A549 (cell line): ENCODE measurements at regions of chr1 and their contacts with region 1.

Region 1: GRCh38 chr1:155323798-155324610 is 3.3 kb downstream of the RUSC1 start:
- DNase-seq: peak; percentile 97 to 98
- ATAC-seq: peak; percentile 77 to 85
- H3K4me3 ChIP-seq: peak overlapping the region; percentile 71
- H3K27ac ChIP-seq: peak overlapping the region; percentile 94 to 98
- H3K4me1 ChIP-seq: peaks cover 20% of the 10 kb centered on the region
- CTCF ChIP-seq: no peak
- EP300 ChIP-seq: no peak
- POLR2A ChIP-seq: peak; percentile 79
- RAD21 ChIP-seq: no peak

Region 2: DNA sequence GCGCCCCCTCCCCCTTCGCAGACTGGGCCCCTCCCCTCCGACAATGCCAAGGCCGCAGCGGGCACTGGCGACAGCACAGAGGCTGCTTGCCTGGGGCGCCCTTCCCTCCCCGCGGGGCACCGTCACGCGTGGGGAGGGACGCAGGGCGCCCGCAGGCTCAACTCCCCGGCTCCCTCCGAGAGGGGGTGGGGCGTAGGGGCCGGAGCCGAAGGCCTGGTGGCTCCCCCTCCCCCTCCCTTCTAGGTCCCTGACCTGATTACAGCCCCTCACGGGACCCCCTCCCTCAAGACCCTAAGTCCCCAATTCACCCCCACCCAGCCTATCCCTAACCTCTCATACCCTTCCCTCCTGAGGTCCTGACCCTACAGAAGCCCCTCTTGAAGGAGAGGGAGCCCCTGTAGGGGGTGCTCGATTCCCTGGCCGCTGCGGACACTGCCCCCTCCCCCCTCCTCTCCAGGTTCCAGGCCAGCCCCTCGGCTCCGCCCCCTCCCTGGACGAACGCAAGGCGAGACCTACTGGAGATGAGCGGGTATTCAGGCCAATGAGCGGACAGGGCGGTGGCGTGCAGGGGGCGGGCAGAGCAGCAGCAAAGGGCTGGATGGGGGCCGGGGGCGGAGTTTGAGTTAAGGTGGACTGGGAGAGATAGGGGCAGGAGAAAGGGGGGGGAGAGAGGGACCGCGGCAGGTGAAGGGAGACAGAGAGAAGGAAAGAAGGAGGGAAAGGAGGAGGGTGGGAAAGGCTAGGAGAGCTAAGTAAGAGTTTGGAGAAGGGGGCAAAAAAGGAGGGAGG is 322.1 kb before region 1 on chr1:
- CTCF ChIA-PET with region 1: no interaction called
- POLR2A ChIA-PET with region 1: no interaction called
- DNase-seq: peak; percentile 96 to 100
- ATAC-seq: peak; percentile 51 to 73
- H3K4me3 ChIP-seq: peak overlapping the region; percentile 80
- H3K27ac ChIP-seq: peak overlapping the region; percentile 98 to 100
- H3K4me1 ChIP-seq: peaks cover 43% of the 10 kb centered on the region
- CTCF ChIP-seq: peak; percentile 46
- EP300 ChIP-seq: no peak
- POLR2A ChIP-seq: no peak; the same call in 1 of the 2 replicates
- RAD21 ChIP-seq: peak; percentile 37 to 62

Region 3: DNA sequence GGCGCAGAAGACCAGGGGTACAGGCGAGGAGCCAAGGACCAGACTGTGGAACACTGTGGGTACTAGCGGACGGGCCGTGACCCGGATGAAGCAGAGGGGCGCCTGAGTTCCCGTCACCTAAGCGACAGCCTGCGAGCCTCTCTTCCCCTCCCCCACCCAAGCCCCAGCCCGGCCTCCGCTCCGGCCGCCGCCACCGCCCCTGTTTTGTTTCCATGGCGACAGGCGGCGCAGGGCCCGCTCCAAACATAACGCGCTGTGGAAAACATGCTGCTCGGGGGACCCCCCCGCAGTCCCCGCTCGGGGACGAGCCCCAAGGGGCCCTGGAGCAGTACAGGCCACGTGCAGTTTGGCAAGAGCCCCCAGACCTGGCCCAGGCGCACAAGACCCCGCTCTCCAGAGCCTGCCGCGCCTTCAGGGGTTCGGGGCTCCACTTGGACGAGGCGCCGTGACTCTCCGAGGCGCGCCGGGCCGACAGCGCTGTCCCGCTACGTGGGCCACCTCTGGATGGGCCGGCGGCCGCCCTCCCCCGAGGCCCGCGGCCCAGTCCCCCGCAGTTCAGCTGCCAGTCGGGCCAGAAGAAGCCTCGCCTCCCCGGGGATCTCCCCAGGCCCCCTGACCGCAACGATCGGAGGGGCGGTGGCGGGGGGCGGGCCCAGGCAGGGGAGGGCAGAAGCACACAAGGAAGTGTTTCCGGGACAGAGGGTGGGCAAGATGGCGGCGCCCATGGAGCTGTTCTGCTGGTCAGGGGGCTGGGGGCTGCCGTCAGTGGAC is 115.3 kb before region 1 on chr1 and contains the start of gene MTX1:
- CTCF ChIA-PET with region 1: interaction called, 14 read pairs
- POLR2A ChIA-PET with region 1: no interaction called
- DNase-seq: peak; percentile 76 to 84
- ATAC-seq: peak; percentile 75 to 87
- H3K4me3 ChIP-seq: peak within 1 kb of the TSS; percentile 90
- H3K27ac ChIP-seq: peak within 1 kb of the TSS; percentile 97 to 99
- H3K4me1 ChIP-seq: peaks cover 23% of the 10 kb centered on the region
- CTCF ChIP-seq: no peak
- EP300 ChIP-seq: no peak; a peak in 1 of 5 replicates
- POLR2A ChIP-seq: peak; percentile 52
- RAD21 ChIP-seq: no peak
- polyA plus RNA-seq, gene MTX1: 53.4 and 73.9 TPM in 2 replicates

Region 4: DNA sequence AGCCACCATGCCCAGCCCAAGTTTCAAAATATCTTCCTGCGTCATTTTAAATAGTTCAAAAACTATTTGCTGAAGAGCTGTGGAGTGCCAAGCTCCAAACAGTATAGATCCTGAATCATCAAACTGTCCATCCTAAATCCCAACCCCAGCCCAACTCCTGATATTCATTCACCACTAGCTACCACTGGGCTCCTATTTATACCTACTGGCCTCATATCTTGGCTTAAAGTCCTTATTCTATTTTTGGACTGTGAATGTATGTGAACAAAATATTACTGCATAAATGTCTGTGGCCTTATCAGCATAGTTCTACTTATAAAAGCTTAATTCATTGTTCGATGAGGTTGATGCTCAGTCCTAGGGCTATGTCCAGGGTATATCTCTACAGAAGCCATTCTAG is 56.6 kb before region 1 on chr1:
- CTCF ChIA-PET with region 1: interaction called, 26 read pairs
- POLR2A ChIA-PET with region 1: interaction called, 14 read pairs
- DNase-seq: no peak
- ATAC-seq: no peak
- H3K4me3 ChIP-seq: no peak overlapping the region
- H3K27ac ChIP-seq: no peak overlapping the region
- H3K4me1 ChIP-seq: peaks cover 13% of the 10 kb centered on the region
- CTCF ChIP-seq: no peak
- EP300 ChIP-seq: no peak
- POLR2A ChIP-seq: no peak
- RAD21 ChIP-seq: no peak

Region 5: GRCh38 chr1:155287987-155288543 is 35.9 kb before region 1 on chr1:
- CTCF ChIA-PET with region 1: interaction called, 11 read pairs
- POLR2A ChIA-PET with region 1: no interaction called
- DNase-seq: no peak
- ATAC-seq: no peak
- H3K4me3 ChIP-seq: no peak overlapping the region
- H3K27ac ChIP-seq: no peak overlapping the region
- H3K4me1 ChIP-seq: no peaks in the 10 kb centered on the region
- CTCF ChIP-seq: no peak
- EP300 ChIP-seq: no peak
- POLR2A ChIP-seq: no peak
- RAD21 ChIP-seq: no peak

Region 6: GRCh38 chr1:155308493-155309422 is 15.2 kb before region 1 on chr1 and contains the start of gene FDPS:
- CTCF ChIA-PET with region 1: interaction called, 41 read pairs
- POLR2A ChIA-PET with region 1: interaction called, 4 read pairs
- DNase-seq: peak; percentile 98 to 99
- ATAC-seq: peak; percentile 98
- H3K4me3 ChIP-seq: peak within 1 kb of the TSS; percentile 97
- H3K27ac ChIP-seq: peak within 1 kb of the TSS; percentile 93 to 95
- H3K4me1 ChIP-seq: peaks cover 27% of the 10 kb centered on the region
- CTCF ChIP-seq: no peak
- EP300 ChIP-seq: no peak
- POLR2A ChIP-seq: peak; percentile 74
- RAD21 ChIP-seq: no peak
- polyA plus RNA-seq, gene FDPS: 143 and 148 TPM in 2 replicates

Region 7: DNA sequence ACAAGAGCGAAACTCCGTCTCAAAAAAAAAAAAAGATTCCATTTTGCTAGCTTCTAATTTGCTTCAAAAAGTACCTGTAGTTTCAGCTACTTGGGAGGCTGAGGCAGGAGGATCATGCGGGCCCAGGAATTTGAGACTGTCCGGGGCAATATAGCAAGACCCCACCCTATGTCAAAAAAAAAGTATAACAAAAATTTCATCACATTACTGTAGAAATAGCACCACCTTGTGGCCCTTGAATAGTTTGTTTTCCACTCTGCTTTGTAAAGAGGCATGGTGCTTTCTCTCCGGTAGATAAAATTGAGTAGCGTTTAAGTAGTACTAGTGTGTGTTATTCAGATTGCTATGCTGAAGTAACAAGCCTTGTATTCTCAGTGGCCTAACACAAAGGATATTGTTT is 267.8 kb after region 1 on chr1:
- CTCF ChIA-PET with region 1: interaction called, 11 read pairs
- POLR2A ChIA-PET with region 1: no interaction called
- DNase-seq: peak; percentile 40 to 74
- ATAC-seq: peak; percentile 84 to 87; a peak in 5 of 6 replicates
- H3K4me3 ChIP-seq: no peak overlapping the region
- H3K27ac ChIP-seq: no peak overlapping the region
- H3K4me1 ChIP-seq: no peaks in the 10 kb centered on the region
- CTCF ChIP-seq: peak; percentile 88
- EP300 ChIP-seq: no peak
- POLR2A ChIP-seq: no peak
- RAD21 ChIP-seq: peak; percentile 82 to 89